ENCODE measurements at regions of chr5 and their contacts with region 1.

Region 1: DNA sequence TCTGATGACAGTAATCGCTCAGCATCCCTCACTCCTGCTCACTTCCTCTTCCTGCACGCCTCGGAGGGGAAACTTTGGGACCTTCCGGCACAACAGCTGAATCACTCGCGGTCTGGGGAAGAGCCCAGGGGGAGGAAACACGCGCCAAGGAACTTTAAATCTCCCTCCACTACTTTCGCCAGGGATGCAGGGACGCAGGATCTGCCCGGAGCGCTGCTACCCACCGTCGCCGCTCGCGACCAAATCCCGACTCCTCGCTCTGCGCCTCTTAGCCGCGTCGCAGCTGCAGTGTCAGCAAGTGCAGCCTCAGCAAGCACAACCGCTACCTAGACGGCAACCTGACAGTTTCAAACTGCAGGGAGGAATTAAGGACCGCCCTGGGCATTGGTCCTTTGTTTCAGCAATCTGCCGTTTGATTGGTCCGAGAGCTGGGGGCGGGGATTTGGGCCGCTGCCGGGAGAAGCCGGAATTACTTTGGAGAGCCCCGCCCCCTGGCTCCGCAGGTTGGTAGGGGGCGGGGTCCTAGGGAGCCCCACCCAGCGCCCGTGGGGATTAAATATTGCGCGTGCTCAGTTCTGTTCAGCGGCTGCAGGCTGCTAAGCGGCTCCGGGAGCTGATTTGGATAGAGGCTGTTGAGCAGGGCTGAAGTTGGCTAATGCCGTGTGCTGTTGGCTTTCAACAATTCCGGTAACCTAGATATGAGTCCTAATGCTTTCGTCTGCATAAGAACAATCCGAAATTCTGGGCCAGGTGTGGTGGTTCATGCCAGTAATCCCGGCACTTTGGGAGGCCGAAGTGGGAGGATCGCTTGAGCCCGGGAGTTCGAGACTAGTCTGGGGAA is at the start of gene POC5:
- DNase-seq: peak; percentile 96 to 99 (median 98)
- ATAC-seq: peak; percentile 92
- H3K4me3 ChIP-seq: peak within 1 kb of the TSS; percentile 79
- H3K4me3 Mint-ChIP-seq: peak within 1 kb of the TSS; percentile 100
- H3K27ac ChIP-seq: peak within 1 kb of the TSS; percentile 71 to 82
- H3K27ac Mint-ChIP-seq: peak within 1 kb of the TSS; percentile 93
- H3K4me1 ChIP-seq: peaks cover 13% of the 10 kb centered on the region
- H3K4me1 Mint-ChIP-seq: peaks cover 42% of the 10 kb centered on the region
- H3K27me3 ChIP-seq: no peaks in the 10 kb centered on the region
- H3K27me3 Mint-ChIP-seq: no peaks in the 10 kb centered on the region
- CTCF ChIP-seq: no peak
- total RNA-seq, gene POC5: 5.7 to 6.2 TPM

Region 2: GRCh38 chr5:75890546-75890945 is 173.2 kb after region 1 on chr5:
- CTCF ChIA-PET with region 1: no interaction called
- POLR2A ChIA-PET with region 1: no interaction called
- intact Hi-C with region 1: no loop called
- DNase-seq: no peak
- ATAC-seq: no peak
- H3K4me3 ChIP-seq: no peak overlapping the region
- H3K4me3 Mint-ChIP-seq: no peak overlapping the region
- H3K27ac ChIP-seq: no peak overlapping the region
- H3K27ac Mint-ChIP-seq: no peak overlapping the region
- H3K4me1 ChIP-seq: no peaks in the 10 kb centered on the region
- H3K4me1 Mint-ChIP-seq: no peaks in the 10 kb centered on the region
- H3K27me3 ChIP-seq: peaks cover 0 to 2% of the 10 kb centered on the region in 2 experiments
- H3K27me3 Mint-ChIP-seq: peaks cover 5% of the 10 kb centered on the region
- CTCF ChIP-seq: no peak

Region 3: DNA sequence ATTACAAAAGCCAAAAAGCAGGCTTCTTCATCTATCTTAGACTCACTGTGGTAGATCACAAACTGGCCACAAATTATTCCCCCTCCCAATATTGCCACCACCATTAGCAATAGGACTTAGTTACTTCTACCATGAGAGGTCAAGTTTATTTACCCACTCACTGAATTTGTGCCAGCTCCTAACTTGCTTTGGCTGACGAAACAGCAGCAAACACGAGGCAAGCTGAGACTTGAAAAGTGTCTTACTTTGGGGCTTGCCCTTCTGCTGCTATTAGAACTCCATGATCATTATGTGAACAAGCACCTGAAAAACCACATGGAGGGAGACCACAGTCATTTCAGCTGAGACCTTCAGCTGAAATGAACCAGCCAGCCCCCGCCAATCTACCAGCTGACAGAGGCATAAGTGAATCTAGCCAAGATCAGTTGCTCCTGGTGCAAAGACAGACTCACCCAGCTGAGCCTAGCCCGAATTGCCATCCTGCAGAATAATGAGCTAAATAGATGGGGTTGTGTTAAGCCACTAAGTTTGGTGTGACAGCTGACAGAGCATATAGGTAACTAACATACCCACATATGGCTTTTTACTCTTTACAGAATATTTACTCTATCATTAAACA is 1769.2 kb after region 1 on chr5:
- CTCF ChIA-PET with region 1: no interaction called
- POLR2A ChIA-PET with region 1: no interaction called
- intact Hi-C with region 1: loop called in 1 of 2 experiments (anchors 10 kb)
- DNase-seq: no peak
- ATAC-seq: no peak
- H3K4me3 ChIP-seq: no peak overlapping the region
- H3K4me3 Mint-ChIP-seq: no peak overlapping the region
- H3K27ac ChIP-seq: no peak overlapping the region
- H3K27ac Mint-ChIP-seq: no peak overlapping the region
- H3K4me1 ChIP-seq: peaks cover 5% of the 10 kb centered on the region
- H3K4me1 Mint-ChIP-seq: peaks cover 19% of the 10 kb centered on the region
- H3K27me3 ChIP-seq: no peaks in the 10 kb centered on the region
- H3K27me3 Mint-ChIP-seq: no peaks in the 10 kb centered on the region
- CTCF ChIP-seq: no peak